Activated T-helper 2 cell treated with anti-CD3 and anti-CD28 coated beads, Interferon-gamma antibody, Interleukin-2, Interleukin-4, amounts not matched to agents 10 μg/mL and 5 μg/mL and 100 μg/mL, durations not matched to agents 14 hours and 24 hours and 36 hours (primary cell): ENCODE measurements at regions of chr11 and their contacts with region 1.

Region 1: DNA sequence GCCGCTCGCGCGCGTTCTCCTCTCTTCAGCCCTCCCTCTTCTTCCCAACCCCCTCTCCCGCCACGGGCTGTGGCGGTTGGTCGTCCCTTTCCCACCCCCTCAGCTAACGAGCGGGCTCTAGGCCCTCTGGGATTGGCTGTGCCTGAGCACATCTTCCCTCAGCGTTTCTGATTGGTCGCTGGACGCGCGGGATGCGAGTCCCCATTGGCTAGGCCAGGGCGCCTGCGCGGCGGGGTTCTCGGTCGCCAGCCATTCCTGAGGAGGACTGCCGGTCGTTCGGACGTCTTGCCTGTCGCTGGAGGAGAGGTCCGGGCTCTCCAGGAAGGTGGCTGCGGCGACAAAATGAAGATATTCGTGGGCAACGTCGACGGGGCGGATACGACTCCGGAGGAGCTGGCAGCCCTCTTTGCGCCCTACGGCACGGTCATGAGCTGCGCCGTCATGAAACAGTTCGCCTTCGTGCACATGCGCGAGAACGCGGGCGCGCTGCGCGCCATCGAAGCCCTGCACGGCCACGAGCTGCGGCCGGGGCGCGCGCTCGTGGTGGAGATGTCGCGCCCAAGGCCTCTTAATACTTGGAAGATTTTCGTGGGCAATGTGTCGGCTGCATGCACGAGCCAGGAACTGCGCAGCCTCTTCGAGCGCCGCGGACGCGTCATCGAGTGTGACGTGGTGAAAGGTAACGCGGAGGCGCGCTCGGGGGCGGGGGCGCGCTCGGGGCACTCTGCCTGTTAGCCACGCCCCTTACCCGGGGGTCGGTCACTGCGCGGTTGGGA is at the start of gene RBM14:
- DNase-seq: peak; percentile 98
- H3K4me3 Mint-ChIP-seq: peak within 1 kb of the TSS; percentile 93
- H3K27ac Mint-ChIP-seq: peak within 1 kb of the TSS; percentile 97
- H3K4me1 Mint-ChIP-seq: peaks cover 23% of the 10 kb centered on the region
- H3K27me3 Mint-ChIP-seq: no peaks in the 10 kb centered on the region
- total RNA-seq, gene RBM14: 188 and 197 TPM in 2 replicates

Region 2: GRCh38 chr11:66545701-66546367 is 70.7 kb before region 1 on chr11 and contains the start of gene ZDHHC24:
- intact Hi-C with region 1: loop called (anchors 2 kb)
- DNase-seq: peak; percentile 87
- H3K4me3 Mint-ChIP-seq: peak within 1 kb of the TSS; percentile 86
- H3K27ac Mint-ChIP-seq: peak within 1 kb of the TSS; percentile 58
- H3K4me1 Mint-ChIP-seq: peaks cover 24% of the 10 kb centered on the region
- H3K27me3 Mint-ChIP-seq: peaks cover 15% of the 10 kb centered on the region
- total RNA-seq, gene ZDHHC24: 14.0 and 14.4 TPM in 2 replicates

Region 3: GRCh38 chr11:66579017-66579606 is 37.5 kb before region 1 on chr11:
- intact Hi-C with region 1: loop called (anchors 5 kb)
- DNase-seq: peak; percentile 58
- H3K4me3 Mint-ChIP-seq: no peak overlapping the region
- H3K27ac Mint-ChIP-seq: no peak overlapping the region
- H3K4me1 Mint-ChIP-seq: peaks cover 13% of the 10 kb centered on the region
- H3K27me3 Mint-ChIP-seq: peaks cover 9% of the 10 kb centered on the region

Region 4: DNA sequence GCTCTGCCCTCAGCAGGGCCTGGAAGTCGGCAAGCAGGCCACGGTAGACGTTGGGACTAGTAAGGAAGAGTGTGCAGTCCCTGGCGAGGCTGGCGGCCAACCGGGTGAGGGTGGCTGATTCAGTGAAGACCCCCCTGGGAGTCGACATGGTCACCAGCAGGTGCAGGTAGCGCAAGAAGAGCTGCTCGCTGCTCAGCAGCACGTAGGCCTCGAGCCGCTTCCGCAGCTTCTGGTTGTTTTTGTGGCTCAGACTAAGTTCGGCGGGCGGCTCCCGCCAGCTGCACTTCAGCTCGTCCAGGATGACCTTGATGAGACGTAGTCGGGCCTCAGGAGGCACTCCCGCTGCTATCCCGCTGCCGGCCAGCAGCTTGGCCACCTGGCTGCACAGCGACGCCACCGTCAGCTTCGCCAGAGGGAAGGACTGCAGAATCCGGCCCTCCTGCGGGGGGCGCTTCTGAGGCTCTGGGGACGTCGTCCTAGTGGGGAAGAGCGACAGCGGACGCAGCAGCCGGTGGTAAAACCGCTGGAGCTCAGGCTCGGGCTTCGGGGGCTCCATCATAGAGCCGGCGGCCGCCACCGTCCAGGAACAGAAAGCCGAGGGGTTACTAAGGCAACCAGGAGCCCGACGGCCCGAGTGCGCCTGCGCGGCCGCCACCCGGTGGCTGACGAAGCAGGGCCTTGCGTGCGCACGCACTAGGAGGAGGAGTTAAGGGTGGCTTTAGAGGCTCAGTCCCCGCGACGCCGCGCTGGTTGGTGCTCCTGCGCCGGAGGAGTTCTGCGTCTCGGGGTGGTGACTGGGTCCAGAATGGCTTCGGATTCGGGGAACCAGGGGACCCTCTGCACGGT is 23.9 kb before region 1 on chr11 and contains the starts of genes CCDC87 and CCS:
- intact Hi-C with region 1: loop called (anchors 1 kb)
- DNase-seq: peak; percentile 96
- H3K4me3 Mint-ChIP-seq: peak within 1 kb of the TSS; percentile 98
- H3K27ac Mint-ChIP-seq: peak within 1 kb of the TSS; percentile 94
- H3K4me1 Mint-ChIP-seq: peaks cover 16% of the 10 kb centered on the region
- H3K27me3 Mint-ChIP-seq: no peaks in the 10 kb centered on the region
- total RNA-seq, gene CCDC87: 0.09 and 0.14 TPM in 2 replicates
- total RNA-seq, gene CCS: 30.4 and 31.1 TPM in 2 replicates

Region 5: DNA sequence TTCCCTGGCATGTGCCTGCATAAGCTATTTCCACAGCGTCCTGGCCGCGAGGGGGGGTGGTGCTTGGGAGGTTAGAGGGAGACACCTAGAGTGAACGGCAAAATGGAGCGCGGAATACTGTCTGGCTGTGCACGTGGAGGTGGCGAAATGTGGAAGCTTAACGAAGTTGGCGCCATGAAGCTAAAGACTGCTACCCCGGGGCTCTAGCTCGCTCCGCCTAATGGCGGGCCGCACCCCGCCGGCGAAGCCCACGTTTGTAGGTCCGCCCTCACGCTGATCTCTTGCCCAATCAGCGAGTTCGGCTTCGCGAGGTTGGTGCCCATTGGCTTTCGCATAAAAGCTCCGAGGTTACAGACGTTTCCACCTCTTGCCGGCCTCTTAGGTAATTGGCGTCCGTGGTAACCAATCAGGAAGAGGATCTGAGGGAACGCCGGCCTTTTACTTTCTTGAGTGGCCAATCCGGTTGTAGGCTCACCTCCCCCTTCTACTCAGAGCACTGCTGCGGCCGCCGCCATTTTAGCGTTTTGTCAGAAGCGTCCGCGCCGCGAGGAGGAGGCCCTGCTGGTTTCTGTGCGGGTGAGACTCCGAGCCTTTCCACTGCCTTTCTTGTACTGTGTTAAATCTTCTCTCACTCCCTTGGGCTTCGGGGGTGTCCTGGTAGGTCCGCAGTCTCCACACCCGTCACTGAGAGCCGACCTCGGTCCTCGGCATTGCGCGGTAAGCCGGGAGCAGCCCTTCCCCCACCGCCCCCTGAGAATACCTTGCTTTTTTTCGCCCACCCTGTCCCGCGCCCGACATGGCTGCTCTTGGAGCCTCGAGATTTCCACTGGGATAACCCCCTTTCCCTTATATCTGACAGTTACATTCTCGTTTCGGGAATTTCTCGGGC is 21.9 kb after region 1 on chr11 and contains the start of gene RBM4:
- intact Hi-C with region 1: loop called (anchors 1 kb)
- DNase-seq: peak; percentile 98
- H3K4me3 Mint-ChIP-seq: peak within 1 kb of the TSS; percentile 97
- H3K27ac Mint-ChIP-seq: peak within 1 kb of the TSS; percentile 93
- H3K4me1 Mint-ChIP-seq: peaks cover 53% of the 10 kb centered on the region
- H3K27me3 Mint-ChIP-seq: no peaks in the 10 kb centered on the region
- total RNA-seq, gene RBM4: 125 and 129 TPM in 2 replicates

Region 6: DNA sequence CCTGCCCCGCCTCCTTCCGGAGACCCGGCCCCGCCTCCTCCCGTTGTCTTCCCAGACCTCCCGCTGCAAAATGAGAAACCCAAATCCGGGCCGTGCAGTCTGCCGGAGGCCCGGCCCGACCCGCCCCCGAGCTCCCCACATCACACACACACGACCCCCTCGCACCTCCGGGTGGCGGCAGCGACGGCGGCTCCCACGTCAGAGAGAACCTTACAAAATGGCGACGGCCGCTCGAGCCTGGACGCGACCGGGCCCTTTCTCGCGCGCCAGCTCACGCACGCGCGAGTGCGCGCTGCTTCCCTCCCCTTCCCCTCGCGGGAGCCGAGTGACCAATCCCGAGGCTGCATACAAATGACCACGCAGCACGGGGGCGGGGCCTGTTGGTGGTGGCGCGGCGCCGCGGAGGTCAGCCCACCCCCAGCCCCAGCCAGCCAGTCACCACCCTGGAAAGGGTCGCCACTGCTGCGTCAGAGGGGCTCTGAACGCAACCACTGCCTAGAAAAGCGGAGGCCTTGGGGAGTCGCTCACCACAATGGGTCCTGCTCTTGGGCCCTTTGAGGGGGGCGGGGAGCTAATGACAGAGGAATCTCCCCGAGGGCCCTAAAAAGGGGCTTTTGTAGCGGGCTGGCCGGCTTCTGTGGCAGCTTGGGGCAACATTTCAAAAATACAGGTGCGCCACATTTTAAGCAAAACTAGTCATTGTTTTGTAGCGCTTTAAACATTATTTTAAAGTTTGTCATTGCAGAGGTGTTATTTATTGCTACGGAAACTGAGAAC is 61.2 kb after region 1 on chr11 and contains the start of gene RBM4B:
- intact Hi-C with region 1: loop called (anchors 2 kb)
- DNase-seq: peak; percentile 92
- H3K4me3 Mint-ChIP-seq: peak within 1 kb of the TSS; percentile 92
- H3K27ac Mint-ChIP-seq: peak within 1 kb of the TSS; percentile 97
- H3K4me1 Mint-ChIP-seq: peaks cover 30% of the 10 kb centered on the region
- H3K27me3 Mint-ChIP-seq: no peaks in the 10 kb centered on the region
- total RNA-seq, gene RBM4B: 16.5 and 18.4 TPM in 2 replicates

Region 7: DNA sequence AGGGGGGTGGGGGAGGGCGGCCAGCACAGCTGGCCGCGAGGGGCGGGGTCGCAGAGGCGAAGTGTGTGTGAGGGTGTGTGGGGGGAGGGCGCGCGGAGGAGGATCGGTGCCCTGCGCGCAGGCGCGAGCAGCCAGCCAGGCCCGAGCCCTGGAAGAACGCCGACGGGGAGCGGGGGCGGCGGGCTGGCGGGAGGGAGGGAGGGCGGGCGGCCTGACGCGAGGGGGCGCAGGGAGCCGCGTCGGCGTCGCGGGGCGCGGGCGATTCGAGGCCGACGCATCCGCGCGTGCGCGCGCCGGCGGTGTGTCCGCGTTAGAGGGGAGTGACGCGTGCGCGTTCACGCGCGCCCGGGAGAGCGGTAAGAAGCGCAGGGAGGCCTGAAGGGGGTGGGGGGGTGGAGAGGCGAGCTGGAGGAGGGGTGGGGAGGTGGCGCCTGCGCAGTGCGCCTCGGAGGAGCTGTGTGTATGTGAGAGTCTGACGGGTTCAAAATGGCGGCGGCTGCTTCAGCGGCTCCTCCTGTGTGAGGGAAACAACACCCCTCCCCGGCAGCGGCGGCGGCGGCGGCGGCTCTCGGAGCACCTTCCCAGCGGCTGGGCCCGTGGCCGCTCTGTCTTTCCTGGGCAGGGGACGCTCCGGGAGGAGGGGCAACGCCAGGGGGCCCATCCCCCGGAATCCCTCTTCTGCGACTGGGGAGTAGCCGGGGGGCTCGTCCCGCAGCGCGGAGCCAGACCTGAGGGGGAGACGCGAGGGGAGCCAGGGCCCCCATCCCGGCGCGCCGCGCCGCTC is 502.4 kb after region 1 on chr11 and contains the start of gene KDM2A:
- intact Hi-C with region 1: loop called (anchors 10 kb)
- DNase-seq: peak; percentile 96
- H3K4me3 Mint-ChIP-seq: peak within 1 kb of the TSS; percentile 99
- H3K27ac Mint-ChIP-seq: peak within 1 kb of the TSS; percentile 93
- H3K4me1 Mint-ChIP-seq: peaks cover 17% of the 10 kb centered on the region
- H3K27me3 Mint-ChIP-seq: peaks cover 2% of the 10 kb centered on the region
- total RNA-seq, gene KDM2A: 96.0 and 107 TPM in 2 replicates